ENCODE measurements at regions of chr12 and their contacts with region 1.

Region 1: DNA sequence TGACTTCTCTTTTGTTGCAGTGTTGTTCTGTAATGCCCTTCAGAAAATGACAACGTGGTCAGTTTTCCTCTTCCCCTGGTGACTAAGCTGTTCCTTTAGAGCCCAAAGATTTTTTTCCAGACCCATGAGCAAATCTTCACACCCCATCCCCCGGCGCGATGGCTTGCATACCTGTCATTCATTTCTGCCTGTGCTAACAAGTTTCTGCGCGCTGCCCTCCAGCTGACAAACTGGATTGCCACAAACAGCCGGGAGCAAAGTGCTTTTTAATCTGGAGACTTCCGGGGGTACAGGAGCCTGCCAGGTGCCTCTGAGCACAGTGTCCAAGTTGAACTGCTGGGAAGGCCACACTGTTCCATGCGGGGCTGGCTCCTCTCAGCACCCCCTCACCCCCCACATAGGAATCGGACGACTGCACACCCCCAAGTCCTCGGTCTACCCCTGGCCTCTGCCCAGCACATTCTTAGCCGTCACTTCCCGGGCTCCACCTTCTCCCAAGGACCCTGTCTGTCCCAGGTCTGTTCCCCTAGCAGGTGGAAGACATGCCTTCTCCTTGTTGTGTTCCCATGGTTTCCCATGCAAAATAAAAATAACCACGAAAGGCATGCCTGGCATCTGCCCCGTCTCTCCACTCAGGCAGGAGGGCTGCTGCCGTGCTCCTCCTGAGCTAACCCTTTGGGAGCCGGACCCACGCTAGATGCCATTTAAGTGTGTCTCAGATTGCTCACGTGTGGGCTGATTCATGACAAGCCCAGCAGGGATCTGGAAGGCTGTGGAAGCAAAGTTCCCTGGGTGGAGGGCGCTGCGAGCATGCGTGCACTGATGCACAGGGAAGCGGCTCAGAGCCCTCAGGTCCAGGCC is 14.1 kb downstream of the RILPL1 start:
- DNase-seq: peak; percentile 87
- ATAC-seq: peak; percentile 84

Region 2: DNA sequence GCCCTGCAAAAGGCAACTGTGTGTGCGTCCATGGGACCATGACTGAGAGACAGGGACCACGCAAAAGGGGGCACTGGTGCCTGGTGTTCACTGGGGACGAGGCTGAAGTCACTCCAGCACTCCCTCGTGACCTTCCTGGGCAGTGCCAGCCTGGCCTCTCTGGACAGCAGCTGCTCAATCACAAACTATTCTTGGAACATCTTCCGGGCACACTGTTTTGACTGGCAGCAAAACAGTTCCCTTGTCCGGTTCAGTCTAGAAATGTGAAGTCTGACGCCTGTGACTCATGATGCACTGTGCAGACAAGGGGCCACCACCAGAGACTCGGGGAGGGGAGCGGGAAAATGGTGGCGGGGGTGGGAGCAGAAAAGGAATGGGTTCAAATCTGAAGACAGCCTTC is 40.6 kb before region 1 on chr12:
- intact Hi-C with region 1: loop called (anchors 1 kb)
- DNase-seq: no peak
- ATAC-seq: peak; percentile 82

Region 3: GRCh38 chr12:123494124-123494851 is 25.1 kb before region 1 on chr12:
- intact Hi-C with region 1: loop called (anchors 1 kb)
- DNase-seq: no peak
- ATAC-seq: peak; percentile 67

Region 4: DNA sequence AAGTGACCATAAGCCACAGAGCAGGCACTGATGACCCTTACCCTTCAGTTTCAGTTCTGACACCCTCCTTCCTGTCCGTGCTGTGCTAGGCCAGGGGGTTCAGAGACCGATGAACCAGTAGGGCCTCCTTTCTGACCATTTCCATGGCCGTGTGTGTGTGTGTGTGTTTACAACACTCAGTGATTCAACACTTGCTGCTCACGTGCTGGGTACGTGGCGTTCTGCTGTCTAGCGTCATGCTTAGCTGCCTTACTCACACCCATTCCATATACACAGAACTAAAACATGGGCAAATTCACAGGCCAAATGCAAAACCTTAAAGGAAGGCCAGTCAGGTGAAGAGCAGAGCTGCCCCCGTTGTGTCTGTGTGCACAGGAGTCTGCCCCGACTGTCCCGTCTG is 310.2 kb after region 1 on chr12:
- intact Hi-C with region 1: no loop called
- DNase-seq: no peak
- ATAC-seq: no peak

Measured in Right ventricle myocardium inferior (tissue), 1 donor.